ENCODE measurements at regions of chr2 and their contacts with region 1.

Region 1: GRCh38 chr2:223959688-223960087 is 2.4 kb downstream of the MRPL44 start:
- DNase-seq: no peak
- H3K4me3 Mint-ChIP-seq: peak overlapping the region; percentile 54
- H3K27ac Mint-ChIP-seq: no peak overlapping the region
- H3K4me1 Mint-ChIP-seq: peaks cover 63% of the 10 kb centered on the region
- H3K27me3 Mint-ChIP-seq: no peaks in the 10 kb centered on the region

Region 2: DNA sequence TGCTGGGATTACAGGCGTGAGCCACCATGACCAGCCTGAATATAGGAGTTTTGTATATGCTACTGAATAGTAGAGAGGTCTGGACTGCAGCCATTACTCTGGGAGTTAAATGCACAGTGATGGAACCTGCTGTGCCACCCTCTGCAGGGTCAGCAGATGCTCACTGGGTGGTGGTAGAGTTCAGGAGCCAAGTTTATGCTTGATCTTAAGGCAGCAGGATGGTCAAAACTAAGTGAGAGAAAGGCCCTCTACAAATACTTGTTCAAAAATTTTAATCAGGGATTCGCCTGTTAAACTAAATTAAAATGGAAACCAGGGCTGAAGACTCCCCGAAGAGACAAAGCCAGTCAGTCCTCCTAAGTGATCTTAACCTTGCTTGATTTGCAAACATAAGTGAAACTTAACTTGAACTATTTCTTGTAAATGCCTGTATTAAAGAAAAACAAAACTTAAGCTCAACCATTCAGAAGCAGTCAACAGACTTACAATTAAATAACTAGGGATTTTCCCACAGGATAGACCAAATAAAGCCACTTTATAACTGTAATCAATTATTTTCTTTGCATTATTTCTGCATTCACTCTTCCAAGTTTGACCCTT is 10.3 kb before region 1 on chr2:
- CTCF ChIA-PET with region 1: interaction called, 12 read pairs
- POLR2A ChIA-PET with region 1: interaction called, 4 read pairs
- DNase-seq: no peak
- H3K4me3 Mint-ChIP-seq: no peak overlapping the region
- H3K27ac Mint-ChIP-seq: peak overlapping the region; percentile 94
- H3K4me1 Mint-ChIP-seq: peaks cover 67% of the 10 kb centered on the region
- H3K27me3 Mint-ChIP-seq: no peaks in the 10 kb centered on the region

Region 3: GRCh38 chr2:223970343-223971128 is 10.8 kb after region 1 on chr2:
- CTCF ChIA-PET with region 1: interaction called, 22 read pairs
- POLR2A ChIA-PET with region 1: no interaction called
- DNase-seq: peak; percentile 72
- H3K4me3 Mint-ChIP-seq: no peak overlapping the region
- H3K27ac Mint-ChIP-seq: no peak overlapping the region
- H3K4me1 Mint-ChIP-seq: peaks cover 8% of the 10 kb centered on the region
- H3K27me3 Mint-ChIP-seq: no peaks in the 10 kb centered on the region